Sciatic nerve (tissue), 2 donors: ENCODE measurements at regions of chr16 and their contacts with region 1.

Region 1: GRCh38 chr16:50665128-50665878 is 15.8 kb downstream of the SNX20 start:
- DNase-seq: peak; percentile 93
- ATAC-seq: peak; percentile 91

Region 2: DNA sequence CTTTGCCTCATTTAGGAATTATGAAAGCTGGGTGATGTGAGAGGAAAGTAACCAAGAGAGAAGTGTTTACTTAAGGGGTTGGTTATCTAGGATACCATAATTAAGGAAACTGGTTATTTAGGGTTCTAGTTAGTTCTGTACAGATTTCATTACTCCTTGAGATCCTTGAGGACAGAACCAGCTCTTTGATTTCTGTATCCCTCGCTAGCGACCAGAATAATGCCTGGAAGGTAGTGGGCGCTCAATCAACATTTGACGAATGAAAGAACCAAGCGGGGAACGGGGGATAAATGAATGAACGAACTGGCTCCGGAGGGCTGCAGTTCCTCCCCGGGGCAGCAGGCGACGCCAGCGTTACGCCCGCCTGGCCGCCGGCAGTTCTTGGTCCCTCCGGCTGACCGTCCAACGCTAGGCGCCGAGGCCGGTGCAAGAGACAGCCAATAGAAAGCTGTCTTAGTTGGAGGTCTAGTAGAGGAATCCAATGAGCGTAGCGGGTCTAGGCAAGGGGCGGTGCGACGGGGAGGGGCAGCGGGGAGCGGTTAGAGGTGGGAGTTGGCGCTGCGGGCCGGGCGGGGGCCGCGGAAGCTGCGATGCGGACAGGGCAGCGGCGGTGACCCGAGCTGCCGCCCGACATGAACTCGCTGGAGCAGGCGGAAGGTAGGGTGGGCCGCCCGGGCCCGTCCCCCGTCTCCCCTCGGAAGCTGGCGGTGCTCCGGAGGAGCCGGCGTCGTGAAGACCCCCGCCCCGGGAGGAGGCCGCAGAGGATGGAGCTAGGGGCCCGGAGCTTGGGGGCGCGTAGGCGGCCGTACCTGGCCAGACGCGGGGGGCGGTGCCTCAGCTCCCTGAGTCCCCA is 640.4 kb before region 1 on chr16 and contains the start of gene CNEP1R1:
- intact Hi-C with region 1: loop called (anchors 10 kb)
- DNase-seq: peak; percentile 96
- ATAC-seq: peak; percentile 100
- total RNA-seq, gene CNEP1R1: 21.7 TPM

Region 3: DNA sequence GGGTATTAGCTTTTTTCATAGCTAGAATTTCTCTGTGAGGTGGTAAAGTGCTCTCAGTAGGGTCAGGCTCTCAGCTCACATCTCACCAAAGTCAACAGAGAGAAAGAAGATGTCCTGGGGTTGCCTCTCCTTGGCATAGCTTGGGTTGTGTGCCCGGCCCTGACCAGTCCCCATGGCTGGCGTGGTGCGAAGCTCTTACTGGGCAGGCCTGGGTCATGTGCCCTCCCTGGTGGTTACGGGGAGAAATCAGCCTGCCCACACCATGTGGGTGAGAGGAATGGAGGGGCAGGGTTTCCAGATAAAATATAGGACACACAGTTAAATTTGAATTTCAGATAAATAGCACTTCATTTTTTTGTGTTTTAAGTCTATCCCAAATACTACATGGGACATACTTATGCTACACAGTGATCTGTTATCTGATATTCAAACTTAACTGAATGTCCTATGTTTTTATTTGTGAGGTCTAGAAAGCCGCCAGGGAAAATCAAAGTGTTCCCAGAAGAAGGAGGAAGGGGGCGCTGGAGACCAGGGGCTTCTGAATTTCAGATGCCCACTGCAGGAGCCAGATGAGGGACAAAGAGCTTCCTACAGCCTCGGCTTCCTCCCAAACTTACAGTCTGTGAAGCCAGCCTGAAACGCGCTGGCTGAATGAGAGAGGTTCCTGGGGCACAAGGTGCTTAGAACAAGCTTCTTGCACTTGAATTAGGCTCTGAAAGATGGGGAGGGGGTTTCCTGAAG is 71.7 kb before region 1 on chr16:
- intact Hi-C with region 1: no loop called
- DNase-seq: no peak
- ATAC-seq: no peak

Region 4: GRCh38 chr16:50696575-50697420 is 31.5 kb after region 1 on chr16:
- intact Hi-C with region 1: loop called (anchors 1 kb)
- DNase-seq: peak; percentile 82
- ATAC-seq: peak; percentile 85